MCF 10A (cell line): ENCODE measurements at regions of chr16 and their contacts with region 1.

Region 1: GRCh38 chr16:48365581-48366164 is 19.5 kb downstream of the SIAH1 start:
- DNase-seq: peak; percentile 91
- H3K4me3 Mint-ChIP-seq: peak overlapping the region; percentile 80
- H3K27ac Mint-ChIP-seq: peak overlapping the region; percentile 95
- H3K4me1 Mint-ChIP-seq: peaks cover 44% of the 10 kb centered on the region
- H3K27me3 Mint-ChIP-seq: no peaks in the 10 kb centered on the region
- CTCF ChIP-seq: no peak

Region 2: DNA sequence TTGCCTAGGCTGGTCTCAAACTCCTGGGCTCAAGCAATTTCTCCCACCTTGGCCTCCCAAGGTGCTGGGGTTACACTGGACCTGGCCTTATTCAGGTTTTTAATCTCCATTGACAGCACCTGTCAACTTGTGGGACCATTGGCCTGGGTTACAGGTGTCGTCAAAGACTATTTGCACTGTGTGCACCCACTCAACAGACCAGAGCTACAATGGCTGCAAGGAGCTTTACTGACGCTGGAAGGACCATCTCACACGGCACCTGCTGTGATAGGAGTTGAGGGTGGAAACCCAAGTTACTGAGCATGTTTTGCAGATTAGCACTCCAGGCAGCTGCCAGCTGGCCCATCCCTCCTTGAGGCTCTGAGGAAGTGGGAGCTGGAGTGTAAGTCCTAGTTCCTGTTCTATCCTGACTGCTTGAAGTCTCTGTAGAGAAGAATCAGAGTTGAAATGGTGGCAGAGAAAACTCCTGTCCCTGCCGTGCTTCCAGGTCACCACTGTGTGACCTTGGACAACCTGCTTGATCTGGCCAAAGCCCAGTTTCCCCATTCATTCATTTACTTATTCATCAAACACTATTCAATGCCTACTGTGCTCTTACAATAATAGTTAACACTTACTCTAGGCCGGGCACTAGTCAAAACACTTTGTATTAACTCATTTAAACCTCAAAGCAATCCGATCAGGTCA is 164.0 kb before region 1 on chr16:
- CTCF ChIA-PET with region 1: no interaction called
- POLR2A ChIA-PET with region 1: no interaction called
- intact Hi-C with region 1: no loop called
- DNase-seq: no peak
- H3K4me3 Mint-ChIP-seq: no peak overlapping the region
- H3K27ac Mint-ChIP-seq: no peak overlapping the region
- H3K4me1 Mint-ChIP-seq: peaks cover 10% of the 10 kb centered on the region
- H3K27me3 Mint-ChIP-seq: no peaks in the 10 kb centered on the region
- CTCF ChIP-seq: no peak

Region 3: DNA sequence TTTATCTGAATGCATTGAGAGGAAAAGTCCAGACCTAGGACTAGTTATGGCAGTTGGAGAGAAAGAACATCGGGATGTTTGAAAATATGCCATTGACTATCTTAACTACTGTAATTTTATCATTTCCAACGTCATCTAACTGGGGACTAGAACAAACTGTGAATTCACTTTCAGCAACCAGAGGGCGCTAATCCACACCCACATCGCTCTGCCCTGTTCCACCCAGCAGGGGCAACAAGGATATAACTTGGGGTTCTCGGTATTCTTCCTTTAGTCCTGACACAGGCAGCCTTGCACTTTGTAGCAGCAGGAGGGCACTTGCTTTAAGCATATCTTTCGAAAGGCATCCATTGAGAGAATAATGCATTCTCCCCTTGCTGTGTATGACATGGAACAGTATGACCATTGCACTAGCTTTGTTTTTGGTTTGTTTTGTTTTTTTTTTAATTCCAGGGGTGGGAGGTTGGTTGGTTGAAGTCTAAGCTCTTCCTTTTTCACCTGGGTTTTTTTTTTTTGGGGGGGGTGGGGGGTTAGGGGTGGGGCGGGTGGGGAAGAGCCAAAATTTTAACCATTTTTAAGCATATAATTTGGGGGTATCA is 12.0 kb before region 1 on chr16:
- CTCF ChIA-PET with region 1: interaction called, 25 read pairs
- POLR2A ChIA-PET with region 1: interaction called, 21 read pairs
- intact Hi-C with region 1: no loop called
- DNase-seq: peak; percentile 74
- H3K4me3 Mint-ChIP-seq: no peak overlapping the region
- H3K27ac Mint-ChIP-seq: peak overlapping the region; percentile 46
- H3K4me1 Mint-ChIP-seq: no peaks in the 10 kb centered on the region
- H3K27me3 Mint-ChIP-seq: no peaks in the 10 kb centered on the region
- CTCF ChIP-seq: peak; percentile 71

Region 4: GRCh38 chr16:48385272-48386150 is 19.8 kb after region 1 on chr16 and contains the start of gene SIAH1:
- CTCF ChIA-PET with region 1: interaction called, 8 read pairs
- POLR2A ChIA-PET with region 1: interaction called, 157 read pairs
- intact Hi-C with region 1: loop called (anchors 1 kb)
- DNase-seq: peak; percentile 83
- H3K4me3 Mint-ChIP-seq: peak within 1 kb of the TSS; percentile 88
- H3K27ac Mint-ChIP-seq: peak within 1 kb of the TSS; percentile 94
- H3K4me1 Mint-ChIP-seq: peaks cover 18% of the 10 kb centered on the region
- H3K27me3 Mint-ChIP-seq: no peaks in the 10 kb centered on the region
- CTCF ChIP-seq: no peak
- total RNA-seq, gene SIAH1: 19.9 and 22.4 TPM in 2 replicates

Region 5: DNA sequence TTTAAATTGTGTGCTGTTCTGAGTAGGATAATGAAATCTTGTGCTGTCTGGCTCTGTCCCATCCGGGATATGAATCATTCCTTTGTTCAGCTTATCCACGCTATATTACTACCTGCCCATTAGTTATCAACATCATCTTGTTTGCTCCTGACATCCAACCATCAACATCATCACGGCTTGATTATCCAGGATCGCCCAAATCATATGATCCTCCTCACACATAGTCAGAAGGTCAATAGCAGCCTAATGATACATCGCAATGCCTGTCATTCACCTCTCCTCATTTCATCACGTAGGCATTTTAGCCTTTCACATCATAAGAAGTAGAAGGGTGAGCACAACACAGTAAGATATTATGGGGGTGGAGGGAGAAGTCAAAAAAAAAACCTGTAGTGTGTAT is 96.5 kb after region 1 on chr16:
- CTCF ChIA-PET with region 1: no interaction called
- POLR2A ChIA-PET with region 1: interaction called, 6 read pairs
- intact Hi-C with region 1: loop called (anchors 5 kb)
- DNase-seq: peak; percentile 71
- H3K4me3 Mint-ChIP-seq: no peak overlapping the region
- H3K27ac Mint-ChIP-seq: peak overlapping the region; percentile 1
- H3K4me1 Mint-ChIP-seq: peaks cover 33% of the 10 kb centered on the region
- H3K27me3 Mint-ChIP-seq: no peaks in the 10 kb centered on the region
- CTCF ChIP-seq: no peak

Region 6: DNA sequence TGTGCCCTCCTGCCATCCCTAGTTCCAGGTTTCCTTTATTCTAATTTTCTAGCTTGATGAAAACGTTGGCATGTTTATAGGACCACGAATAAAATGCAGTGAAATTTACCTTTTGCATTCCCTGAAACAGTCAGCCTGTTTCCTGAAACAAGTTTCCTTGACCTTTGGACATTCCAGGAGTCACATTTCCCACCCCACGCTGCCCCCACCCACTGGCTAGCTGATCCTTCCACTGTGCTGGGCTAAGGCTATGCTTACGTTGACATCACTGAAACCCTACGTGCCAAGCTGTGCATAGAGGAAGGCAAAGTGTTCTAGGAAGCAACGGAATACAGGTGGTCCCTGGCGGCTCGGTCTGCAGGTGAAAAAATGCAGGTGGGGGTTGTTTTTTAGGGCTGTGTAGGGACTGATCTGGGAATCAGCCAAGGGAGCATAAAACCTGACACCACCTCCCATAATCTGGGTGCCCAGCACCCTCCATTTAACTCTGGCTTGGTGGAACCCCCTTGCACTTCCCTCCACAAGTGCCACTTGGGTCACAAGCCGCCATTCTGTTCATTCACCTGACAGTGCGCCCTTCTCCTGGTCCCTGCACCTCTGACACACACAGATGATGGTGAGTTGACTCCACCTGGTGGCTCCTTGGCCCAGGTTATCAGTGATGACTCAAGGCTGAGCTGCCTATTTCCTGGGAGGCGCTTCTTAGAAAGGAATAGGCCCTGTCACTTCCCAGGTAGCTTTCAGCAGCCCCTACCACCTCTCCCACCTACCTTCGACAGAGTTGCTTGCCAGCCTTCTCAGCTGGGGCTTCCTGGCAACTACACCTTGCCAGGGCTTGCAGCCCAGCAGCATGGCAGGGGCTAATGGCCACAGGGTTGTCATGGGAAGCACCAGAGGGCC is 160.6 kb after region 1 on chr16:
- CTCF ChIA-PET with region 1: interaction called, 169 read pairs
- POLR2A ChIA-PET with region 1: interaction called, 15 read pairs
- intact Hi-C with region 1: loop called (anchors 5 kb)
- DNase-seq: peak; percentile 84
- H3K4me3 Mint-ChIP-seq: no peak overlapping the region
- H3K27ac Mint-ChIP-seq: no peak overlapping the region
- H3K4me1 Mint-ChIP-seq: peaks cover 12% of the 10 kb centered on the region
- H3K27me3 Mint-ChIP-seq: no peaks in the 10 kb centered on the region
- CTCF ChIP-seq: peak; percentile 69